A673 (cell line): ENCODE measurements at regions of chr1 and their contacts with region 1.

Region 1: GRCh38 chr1:40416709-40417108 is 33.6 kb upstream of the ZFP69B start:
- DNase-seq: no peak
- H3K4me3 ChIP-seq: no peak overlapping the region
- H3K27ac ChIP-seq: no peak overlapping the region
- H3K4me1 ChIP-seq: no peaks in the 10 kb centered on the region
- H3K27me3 ChIP-seq: no peaks in the 10 kb centered on the region
- CTCF ChIP-seq: no peak

Region 2: GRCh38 chr1:39877980-39878956 is 538.4 kb before region 1 on chr1:
- CTCF ChIA-PET with region 1: no interaction called
- POLR2A ChIA-PET with region 1: interaction called, 13 read pairs
- intact Hi-C with region 1: no loop called
- DNase-seq: no peak
- H3K4me3 ChIP-seq: no peak overlapping the region
- H3K27ac ChIP-seq: no peak overlapping the region
- H3K4me1 ChIP-seq: no peaks in the 10 kb centered on the region
- H3K27me3 ChIP-seq: no peaks in the 10 kb centered on the region
- CTCF ChIP-seq: no peak